Endothelial cell of umbilical vein (primary cell): ENCODE measurements at regions of chr18 and their contacts with region 1.

Region 1: GRCh38 chr18:8730080-8730827 is 24.9 kb downstream of the MTCL1 start:
- DNase-seq: peak; percentile 95
- H3K4me3 ChIP-seq: no peak overlapping the region
- H3K27ac ChIP-seq: peak overlapping the region; percentile 99
- H3K4me1 ChIP-seq: peaks cover 28% of the 10 kb centered on the region
- H3K27me3 ChIP-seq: no peaks in the 10 kb centered on the region
- CTCF ChIP-seq: no peak
- POLR2A ChIP-seq: peak; percentile 73

Region 2: GRCh38 chr18:8661754-8662569 is 68.3 kb before region 1 on chr18:
- CTCF ChIA-PET with region 1: no interaction called
- POLR2A ChIA-PET with region 1: no interaction called
- dilution Hi-C with region 1: no loop called
- intact Hi-C with region 1: loop called (anchors 2 kb)
- DNase-seq: peak; percentile 68
- H3K4me3 ChIP-seq: peak overlapping the region in 1 of 3 experiments; percentile 23
- H3K27ac ChIP-seq: peak overlapping the region; percentile 37
- H3K4me1 ChIP-seq: peaks cover 26% of the 10 kb centered on the region
- H3K27me3 ChIP-seq: no peaks in the 10 kb centered on the region
- CTCF ChIP-seq: no peak
- POLR2A ChIP-seq: no peak

Region 3: DNA sequence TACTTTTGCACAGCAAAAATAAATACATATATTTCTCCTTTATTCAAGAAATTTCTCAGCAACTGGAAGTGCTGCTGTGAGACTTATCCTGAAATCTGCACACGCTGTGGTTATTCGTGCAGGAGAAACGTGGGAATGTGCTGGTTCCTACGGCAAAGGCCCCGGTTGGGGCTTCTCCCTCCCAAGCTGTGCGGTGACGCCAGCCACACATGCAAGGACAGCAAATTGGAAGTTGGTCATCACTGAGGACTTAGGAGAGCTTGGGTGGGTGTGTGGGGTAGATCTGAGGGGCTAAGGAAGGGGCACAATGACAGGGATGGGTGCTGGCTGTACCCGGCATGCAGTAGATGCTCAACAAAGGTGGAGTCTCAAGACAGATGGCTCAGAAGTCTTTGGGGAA is 41.4 kb before region 1 on chr18:
- CTCF ChIA-PET with region 1: no interaction called
- POLR2A ChIA-PET with region 1: no interaction called
- dilution Hi-C with region 1: no loop called
- intact Hi-C with region 1: no loop called
- DNase-seq: no peak
- H3K4me3 ChIP-seq: no peak overlapping the region
- H3K27ac ChIP-seq: no peak overlapping the region
- H3K4me1 ChIP-seq: no peaks in the 10 kb centered on the region
- H3K27me3 ChIP-seq: peaks cover 0 to 3% of the 10 kb centered on the region in 2 experiments
- CTCF ChIP-seq: no peak
- POLR2A ChIP-seq: no peak

Region 4: GRCh38 chr18:8750954-8751415 is 20.7 kb after region 1 on chr18:
- CTCF ChIA-PET with region 1: interaction called, 3 read pairs
- POLR2A ChIA-PET with region 1: interaction called, 4 read pairs
- dilution Hi-C with region 1: no loop called
- intact Hi-C with region 1: loop called (anchors 1 kb)
- DNase-seq: peak; percentile 81
- H3K4me3 ChIP-seq: no peak overlapping the region
- H3K27ac ChIP-seq: peak overlapping the region; percentile 50
- H3K4me1 ChIP-seq: peaks cover 39% of the 10 kb centered on the region
- H3K27me3 ChIP-seq: no peaks in the 10 kb centered on the region
- CTCF ChIP-seq: no peak
- POLR2A ChIP-seq: no peak

Region 5: GRCh38 chr18:8800449-8800848 is 70.2 kb after region 1 on chr18:
- CTCF ChIA-PET with region 1: no interaction called
- POLR2A ChIA-PET with region 1: no interaction called
- dilution Hi-C with region 1: no loop called
- intact Hi-C with region 1: loop called (anchors 1 kb)
- DNase-seq: peak; percentile 24
- H3K4me3 ChIP-seq: no peak overlapping the region
- H3K27ac ChIP-seq: peak overlapping the region; percentile 94
- H3K4me1 ChIP-seq: peaks cover 46% of the 10 kb centered on the region
- H3K27me3 ChIP-seq: no peaks in the 10 kb centered on the region
- CTCF ChIP-seq: no peak
- POLR2A ChIP-seq: no peak

Region 6: DNA sequence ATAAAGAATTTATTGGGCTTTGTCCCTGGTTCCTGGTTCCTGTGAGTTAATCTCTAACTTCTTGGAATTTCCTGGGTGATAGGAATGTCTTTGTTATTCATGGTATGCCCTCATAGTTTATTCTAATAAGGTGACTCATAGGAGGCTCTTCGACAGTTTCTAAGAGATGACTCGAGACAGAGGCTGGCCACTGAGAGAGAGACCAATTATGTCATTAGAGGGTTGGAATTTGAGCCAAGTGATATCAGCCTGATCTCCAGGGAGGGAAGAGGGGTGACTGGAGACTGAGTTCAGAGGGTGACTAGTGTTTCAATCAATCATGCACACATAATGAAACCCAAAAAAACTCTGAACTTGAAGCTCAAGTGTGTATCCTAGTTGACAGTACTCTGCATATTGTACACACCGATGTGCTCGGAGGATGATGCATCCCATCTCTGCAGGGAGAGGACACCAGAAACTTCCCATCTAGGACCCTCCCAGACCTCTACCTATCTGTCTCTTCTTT is 160.8 kb after region 1 on chr18:
- CTCF ChIA-PET with region 1: no interaction called
- POLR2A ChIA-PET with region 1: no interaction called
- dilution Hi-C with region 1: no loop called
- intact Hi-C with region 1: loop called (anchors 1 kb)
- DNase-seq: peak; percentile 83
- H3K4me3 ChIP-seq: no peak overlapping the region
- H3K27ac ChIP-seq: peak overlapping the region; percentile 67
- H3K4me1 ChIP-seq: peaks cover 21% of the 10 kb centered on the region
- H3K27me3 ChIP-seq: no peaks in the 10 kb centered on the region
- CTCF ChIP-seq: no peak
- POLR2A ChIP-seq: no peak